Activated CD8-positive, alpha-beta T cell treated with anti-CD3 and anti-CD28 coated beads for 36 hours (primary cell): ENCODE measurements at regions of chr17 and their contacts with region 1.

Region 1: DNA sequence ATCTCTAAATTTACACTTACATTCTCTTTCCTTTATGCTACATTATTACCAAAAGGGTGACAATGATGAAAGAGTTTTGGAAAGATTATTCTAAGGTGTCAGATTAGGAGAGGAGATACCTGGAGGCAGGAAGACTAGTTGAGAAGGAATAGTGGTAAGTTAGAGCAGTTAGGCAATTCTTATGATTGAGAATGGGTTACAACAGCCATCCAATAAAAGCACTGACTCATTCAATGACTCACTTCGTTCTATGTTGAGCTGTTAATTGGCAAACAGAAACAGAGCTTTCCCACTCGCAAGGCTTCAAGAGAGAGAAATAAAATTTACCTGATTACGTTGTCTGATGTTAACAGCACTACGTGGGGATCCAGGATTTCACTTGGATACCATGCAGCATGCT is 5.8 kb downstream of the NUP88 start:
- DNase-seq: no peak
- ATAC-seq: peak; percentile 55
- H3K4me3 Mint-ChIP-seq: no peak overlapping the region
- H3K27ac Mint-ChIP-seq: peak overlapping the region; percentile 50
- H3K4me1 Mint-ChIP-seq: peaks cover 53% of the 10 kb centered on the region
- H3K27me3 Mint-ChIP-seq: no peaks in the 10 kb centered on the region
- CTCF ChIP-seq: no peak

Region 2: GRCh38 chr17:5391678-5392077 is 22.0 kb before region 1 on chr17:
- CTCF ChIA-PET with region 1: no interaction called
- POLR2A ChIA-PET with region 1: interaction called, 13 read pairs
- intact Hi-C with region 1: no loop called
- DNase-seq: no peak
- ATAC-seq: no peak
- H3K4me3 Mint-ChIP-seq: no peak overlapping the region
- H3K27ac Mint-ChIP-seq: no peak overlapping the region
- H3K4me1 Mint-ChIP-seq: peaks cover 7% of the 10 kb centered on the region
- H3K27me3 Mint-ChIP-seq: no peaks in the 10 kb centered on the region
- CTCF ChIP-seq: no peak

Region 3: GRCh38 chr17:5472511-5472910 is 58.8 kb after region 1 on chr17:
- CTCF ChIA-PET with region 1: no interaction called
- POLR2A ChIA-PET with region 1: no interaction called
- intact Hi-C with region 1: no loop called
- DNase-seq: no peak
- ATAC-seq: no peak
- H3K4me3 Mint-ChIP-seq: no peak overlapping the region
- H3K27ac Mint-ChIP-seq: no peak overlapping the region
- H3K4me1 Mint-ChIP-seq: peaks cover 16% of the 10 kb centered on the region
- H3K27me3 Mint-ChIP-seq: no peaks in the 10 kb centered on the region
- CTCF ChIP-seq: no peak

Region 4: DNA sequence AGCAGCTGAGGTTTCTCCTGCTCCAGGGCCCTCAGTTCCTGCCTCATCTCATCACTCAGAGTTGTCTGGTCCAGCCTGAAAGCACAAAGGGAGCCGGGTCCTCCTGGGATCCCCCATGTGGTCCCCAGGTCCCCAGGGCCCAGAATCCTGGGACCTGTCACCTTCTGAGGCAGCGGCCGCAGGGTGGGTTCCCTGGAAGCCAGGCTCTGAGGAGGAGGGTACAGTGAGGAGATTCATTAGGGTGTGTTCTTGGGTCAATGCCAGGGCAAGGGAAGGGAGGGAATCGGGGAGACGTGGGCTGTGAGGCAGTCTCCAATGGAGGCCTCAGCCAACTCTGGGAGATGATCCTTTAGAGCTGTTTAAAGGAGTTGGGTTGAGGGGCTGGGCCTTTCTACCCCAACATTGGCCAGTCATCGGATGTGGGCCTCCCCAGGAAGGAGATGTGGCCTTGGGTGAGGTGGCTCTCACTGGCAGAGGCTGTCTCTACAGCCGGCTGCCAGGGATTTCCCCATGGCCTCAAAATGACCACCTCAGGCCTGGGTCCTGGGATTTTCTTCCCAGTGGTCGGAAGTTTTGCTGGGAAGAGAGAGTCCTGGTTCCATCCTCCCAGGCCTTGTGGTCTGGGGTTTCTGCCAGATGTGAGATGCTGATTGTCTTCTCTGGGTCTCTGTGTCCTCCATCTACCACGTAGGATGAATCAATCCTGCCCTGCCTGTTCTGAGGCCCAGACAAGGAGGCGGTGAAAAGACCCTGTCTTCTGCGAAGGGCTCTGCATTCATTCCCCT is 123.4 kb after region 1 on chr17:
- CTCF ChIA-PET with region 1: no interaction called
- POLR2A ChIA-PET with region 1: no interaction called
- intact Hi-C with region 1: no loop called
- DNase-seq: no peak
- ATAC-seq: no peak
- H3K4me3 Mint-ChIP-seq: no peak overlapping the region
- H3K27ac Mint-ChIP-seq: peak overlapping the region; percentile 20
- H3K4me1 Mint-ChIP-seq: no peaks in the 10 kb centered on the region
- H3K27me3 Mint-ChIP-seq: no peaks in the 10 kb centered on the region
- CTCF ChIP-seq: no peak